K562 (cell line): ENCODE measurements at regions of chr3 and their contacts with region 1.

Region 1: GRCh38 chr3:170317954-170318353 is 39.6 kb upstream of the SKIL start:
- DNase-seq: no peak
- ATAC-seq: no peak
- H3K4me3 ChIP-seq: no peak overlapping the region
- H3K27ac ChIP-seq: no peak overlapping the region
- H3K4me1 ChIP-seq: peaks cover 0 to 2% of the 10 kb centered on the region in 2 experiments; a peak in 1 of 5 replicates
- H3K27me3 ChIP-seq: no peaks in the 10 kb centered on the region
- CTCF ChIP-seq: no peak
- EP300 ChIP-seq: no peak
- POLR2A ChIP-seq: no peak
- RAD21 ChIP-seq: no peak

Region 2: DNA sequence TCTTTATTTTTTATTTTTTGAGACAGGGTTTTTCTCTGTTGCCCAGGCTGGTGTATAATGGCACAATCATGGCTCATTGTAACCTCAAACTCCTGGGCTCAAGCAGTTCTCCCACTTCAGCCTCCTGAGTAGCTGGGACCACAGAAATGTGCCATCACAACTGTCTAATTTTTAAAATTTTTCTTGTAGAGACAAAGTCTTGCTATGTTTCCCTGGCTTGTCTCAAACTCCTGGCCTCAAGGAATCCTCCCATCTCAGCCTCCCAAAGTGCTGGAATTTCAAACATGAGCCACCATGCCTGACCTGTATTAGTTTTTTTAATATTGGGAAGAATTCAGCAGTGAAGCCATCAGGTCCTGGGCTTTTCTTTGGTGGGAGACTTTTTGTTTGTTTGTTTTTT is 87.1 kb after region 1 on chr3:
- CTCF ChIA-PET with region 1: no interaction called
- POLR2A ChIA-PET with region 1: no interaction called
- in situ Hi-C with region 1: loop called (anchors 10 kb)
- intact Hi-C with region 1: no loop called
- DNase-seq: no peak
- ATAC-seq: no peak
- H3K4me3 ChIP-seq: no peak overlapping the region
- H3K27ac ChIP-seq: no peak overlapping the region
- H3K4me1 ChIP-seq: no peaks in the 10 kb centered on the region
- H3K27me3 ChIP-seq: no peaks in the 10 kb centered on the region
- CTCF ChIP-seq: no peak
- EP300 ChIP-seq: no peak
- POLR2A ChIP-seq: no peak
- RAD21 ChIP-seq: no peak

Region 3: GRCh38 chr3:170499565-170500156 is 181.7 kb after region 1 on chr3:
- CTCF ChIA-PET with region 1: no interaction called
- POLR2A ChIA-PET with region 1: no interaction called
- in situ Hi-C with region 1: no loop called
- intact Hi-C with region 1: loop called (anchors 10 kb)
- DNase-seq: peak; percentile 22 to 64 (median 44)
- ATAC-seq: peak; percentile 98
- H3K4me3 ChIP-seq: no peak overlapping the region
- H3K27ac ChIP-seq: no peak overlapping the region
- H3K4me1 ChIP-seq: peaks cover 0 to 10% of the 10 kb centered on the region in 2 experiments; a peak in 2 of 5 replicates
- H3K27me3 ChIP-seq: no peaks in the 10 kb centered on the region; a peak in 1 of 5 replicates
- CTCF ChIP-seq: peak; percentile 73 to 76 (median 75)
- EP300 ChIP-seq: no peak
- POLR2A ChIP-seq: no peak
- RAD21 ChIP-seq: peak; percentile 60 to 69